Right cardiac atrium (tissue), 5 donors: ENCODE measurements at regions of chr10 and their contacts with region 1.

Region 1: GRCh38 chr10:80504158-80504811 is 33.4 kb upstream of the SH2D4B start:
- DNase-seq: peak in 2 of 3 donors; percentile 44 to 46
- ATAC-seq: peak; percentile 10 to 31
- H3K4me3 ChIP-seq: no peak overlapping the region
- H3K27ac ChIP-seq: peak overlapping the region; percentile 82
- H3K4me1 ChIP-seq: peaks cover 50% of the 10 kb centered on the region
- H3K27me3 ChIP-seq: no peaks in the 10 kb centered on the region

Region 2: GRCh38 chr10:80453701-80454513 is 50.4 kb before region 1 on chr10 and contains the start of gene TSPAN14:
- intact Hi-C with region 1: loop called (anchors 2 to 5 kb)
- DNase-seq: peak; percentile 91 to 95 (median 94)
- ATAC-seq: peak; percentile 94
- H3K4me3 ChIP-seq: peak within 1 kb of the TSS; percentile 57
- H3K27ac ChIP-seq: peak within 1 kb of the TSS; percentile 96
- H3K4me1 ChIP-seq: peaks cover 11% of the 10 kb centered on the region
- H3K27me3 ChIP-seq: no peaks in the 10 kb centered on the region
- total RNA-seq, gene TSPAN14: 24.4 to 44.1 (median 34.1) TPM